ENCODE measurements at regions of chr7 and their contacts with region 1.

Region 1: GRCh38 chr7:30116771-30117170 is 18.0 kb upstream of the MTURN start:
- DNase-seq: peak; percentile 18 to 92
- H3K4me3 ChIP-seq: no peak overlapping the region
- H3K27ac ChIP-seq: peak overlapping the region; percentile 62 to 84
- H3K4me1 ChIP-seq: peaks cover 0 to 11% of the 10 kb centered on the region in 2 donors
- H3K27me3 ChIP-seq: no peaks in the 10 kb centered on the region
- CTCF ChIP-seq: no peak

Region 2: DNA sequence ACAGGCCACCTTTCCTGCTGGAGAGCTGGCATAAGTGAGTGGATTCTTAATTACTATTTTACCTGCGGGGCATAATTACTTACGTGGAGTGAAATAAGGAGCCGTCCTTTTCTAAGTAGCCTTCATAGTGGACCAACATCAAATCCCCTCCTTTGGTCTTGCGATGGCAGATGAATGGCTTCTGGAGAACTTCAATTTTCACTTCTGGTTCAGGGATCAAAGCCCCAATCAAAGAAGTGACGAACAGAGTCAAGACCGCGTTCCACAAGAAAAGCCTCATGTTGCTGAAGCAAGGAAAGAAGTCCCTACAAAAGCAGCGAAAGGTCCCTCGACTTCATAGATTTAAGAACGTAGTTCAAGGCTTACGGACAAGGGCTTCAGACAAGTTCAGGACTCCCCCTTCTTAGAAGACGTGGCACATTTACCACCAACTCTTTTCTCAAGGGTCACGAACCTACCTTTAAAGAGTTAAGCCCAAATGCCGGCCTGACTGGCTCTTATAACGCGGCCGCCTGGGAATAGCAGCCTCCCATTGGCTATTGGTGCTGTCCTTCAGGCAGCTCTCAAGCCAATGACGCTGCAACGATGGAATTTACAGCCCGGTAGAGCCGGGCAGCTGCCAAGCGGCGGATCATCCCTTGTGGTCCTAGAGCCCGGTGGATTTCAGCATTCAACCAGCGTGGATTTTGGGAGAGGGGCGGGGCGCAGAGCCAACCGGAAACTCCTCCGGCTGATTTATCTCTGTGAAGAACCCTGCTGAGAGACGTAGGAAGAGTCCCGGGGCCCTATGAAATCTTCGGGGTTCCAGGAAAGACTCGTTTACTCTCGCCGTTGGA is 90.3 kb before region 1 on chr7 and contains the start of gene FKBP14:
- intact Hi-C with region 1: no loop called
- DNase-seq: peak; percentile 94 to 99
- H3K4me3 ChIP-seq: peak within 1 kb of the TSS; percentile 96 to 97
- H3K27ac ChIP-seq: peak within 1 kb of the TSS; percentile 91 to 96
- H3K4me1 ChIP-seq: peaks cover 0 to 21% of the 10 kb centered on the region in 2 donors
- H3K27me3 ChIP-seq: no peaks in the 10 kb centered on the region
- CTCF ChIP-seq: no peak
- total RNA-seq, gene FKBP14: 7.3 TPM

Region 3: DNA sequence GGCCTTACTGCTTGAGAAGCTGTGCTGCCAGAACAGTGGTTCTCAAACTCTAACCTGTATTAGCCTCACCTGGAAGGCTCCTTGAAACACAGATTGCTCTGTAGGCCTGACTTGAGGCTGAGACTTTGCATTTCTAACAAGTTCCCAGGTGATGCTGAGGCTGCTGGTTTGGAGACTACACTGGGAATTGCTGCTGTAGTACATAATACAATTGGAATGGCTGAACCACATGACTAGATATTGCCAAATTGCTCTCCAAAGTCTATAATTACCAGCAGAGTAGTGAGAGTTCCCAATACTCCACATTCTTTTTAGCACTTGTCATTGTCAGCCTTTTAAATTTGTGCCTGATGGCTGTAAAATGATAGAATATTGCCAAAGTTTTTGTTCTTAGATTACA is 48.7 kb before region 1 on chr7:
- intact Hi-C with region 1: loop called (anchors 2 kb)
- DNase-seq: no peak
- H3K4me3 ChIP-seq: no peak overlapping the region
- H3K27ac ChIP-seq: peak overlapping the region; percentile 12 to 17
- H3K4me1 ChIP-seq: peaks cover 0 to 12% of the 10 kb centered on the region in 2 donors
- H3K27me3 ChIP-seq: no peaks in the 10 kb centered on the region
- CTCF ChIP-seq: no peak

Region 4: GRCh38 chr7:30142710-30143109 is 25.9 kb after region 1 on chr7:
- intact Hi-C with region 1: loop called (anchors 2 kb)
- DNase-seq: peak in 1 of 2 donors; percentile 90
- H3K4me3 ChIP-seq: peak overlapping the region in 1 of 2 donors; percentile 29
- H3K27ac ChIP-seq: peak overlapping the region; percentile 51 to 74
- H3K4me1 ChIP-seq: peaks cover 12 to 39% of the 10 kb centered on the region in 2 donors
- H3K27me3 ChIP-seq: no peaks in the 10 kb centered on the region
- CTCF ChIP-seq: no peak